ENCODE measurements at regions of chr9 and their contacts with region 1.

Region 1: DNA sequence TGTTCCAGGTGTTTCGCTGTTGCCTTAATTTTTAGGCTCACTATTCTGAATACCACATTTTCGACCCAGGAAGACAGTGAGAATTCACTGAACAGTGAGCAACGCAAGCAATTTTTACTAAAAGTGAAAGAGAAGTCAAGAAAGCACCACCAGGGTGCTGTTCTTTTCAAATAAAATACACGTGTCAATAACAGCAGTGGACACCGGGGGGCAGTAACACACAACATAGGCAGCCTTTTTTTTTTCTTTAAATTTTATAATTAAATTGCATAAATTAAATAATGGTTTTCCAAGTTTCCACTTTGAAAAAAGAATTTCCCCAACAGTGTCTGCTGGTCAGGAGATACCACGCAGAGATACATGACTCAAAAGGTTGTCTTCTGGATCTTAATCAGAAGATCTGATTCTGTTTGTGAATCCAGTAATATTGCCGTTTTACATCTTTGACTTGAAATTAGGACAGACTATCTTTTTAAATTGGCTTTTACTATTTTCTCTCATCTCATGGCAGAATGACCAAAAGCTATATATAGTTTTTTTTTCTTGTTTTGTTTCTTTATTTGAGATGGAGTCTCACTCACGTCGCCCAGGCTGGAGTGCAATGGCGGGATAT is 47.1 kb upstream of the SH3GL2 start:
- DNase-seq: peak in 2 of 3 donors; percentile 20 to 66
- ATAC-seq: no peak
- H3K4me3 ChIP-seq: no peak overlapping the region
- H3K27ac ChIP-seq: no peak overlapping the region
- H3K4me1 ChIP-seq: no peaks in the 10 kb centered on the region
- H3K27me3 ChIP-seq: no peaks in the 10 kb centered on the region

Region 2: DNA sequence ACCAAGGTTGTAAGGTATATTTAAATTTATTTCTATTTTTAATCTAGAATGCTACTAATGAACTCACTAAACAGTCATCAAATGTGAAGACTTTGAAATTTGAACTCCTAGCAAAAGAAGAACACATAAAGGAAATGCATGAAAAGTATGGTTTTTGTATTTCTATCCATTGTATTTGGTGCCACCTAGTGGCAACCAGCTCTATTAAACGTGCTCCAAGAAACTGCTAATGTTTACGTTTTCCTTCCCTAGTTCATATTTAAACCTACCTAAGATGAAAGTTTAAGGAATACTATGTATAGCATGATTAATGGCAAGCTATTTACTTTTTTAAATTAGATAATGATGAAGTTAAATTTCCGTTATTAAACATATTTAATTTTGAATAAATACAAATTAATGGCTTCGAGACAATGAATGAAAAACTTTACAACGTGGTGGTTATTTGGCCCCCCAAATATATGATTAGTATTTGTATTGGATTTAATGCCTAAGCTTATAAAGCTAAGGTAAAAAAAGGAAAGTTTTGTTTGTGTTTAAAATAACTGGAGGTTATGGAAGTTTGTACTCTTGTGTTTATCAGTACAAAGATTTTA is 68.8 kb before region 1 on chr9:
- intact Hi-C with region 1: no loop called
- DNase-seq: no peak
- ATAC-seq: no peak
- H3K4me3 ChIP-seq: no peak overlapping the region
- H3K27ac ChIP-seq: no peak overlapping the region
- H3K4me1 ChIP-seq: no peaks in the 10 kb centered on the region
- H3K27me3 ChIP-seq: no peaks in the 10 kb centered on the region

Region 3: GRCh38 chr9:17487467-17487866 is 44.3 kb before region 1 on chr9:
- intact Hi-C with region 1: no loop called
- DNase-seq: no peak
- ATAC-seq: no peak
- H3K4me3 ChIP-seq: no peak overlapping the region
- H3K27ac ChIP-seq: no peak overlapping the region
- H3K4me1 ChIP-seq: no peaks in the 10 kb centered on the region
- H3K27me3 ChIP-seq: no peaks in the 10 kb centered on the region

Region 4: DNA sequence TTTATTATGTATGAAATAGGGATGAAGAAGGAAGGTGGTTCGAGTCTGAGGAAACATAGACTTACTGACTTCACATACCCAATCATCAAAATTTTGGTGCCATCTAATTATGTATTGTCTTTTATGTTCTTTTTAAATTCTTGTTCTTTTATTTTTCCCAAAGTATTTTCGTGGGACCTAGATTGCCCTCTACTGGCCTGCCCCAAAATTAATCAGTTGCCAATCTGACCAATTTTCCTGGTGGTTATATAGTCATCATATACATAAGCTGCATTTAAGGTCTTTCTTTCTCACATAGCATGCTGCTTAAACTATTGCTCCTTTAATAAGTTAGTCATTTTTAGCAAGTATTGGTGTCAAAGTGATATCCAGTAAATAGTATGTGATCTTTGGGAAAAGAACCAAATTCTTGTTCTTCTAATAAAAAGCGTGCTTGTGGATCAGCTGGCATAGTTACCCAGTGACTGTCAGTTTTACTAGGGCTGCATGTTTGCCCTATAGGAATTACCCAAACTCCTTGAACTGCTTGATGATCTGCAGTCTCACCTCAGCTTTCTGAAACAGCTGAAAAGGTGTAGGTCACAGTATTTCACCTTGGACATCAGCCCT is 270.6 kb after region 1 on chr9:
- intact Hi-C with region 1: loop called in 3 of 4 experiments (anchors 5 to 10 kb)
- DNase-seq: no peak
- ATAC-seq: no peak
- H3K4me3 ChIP-seq: no peak overlapping the region
- H3K27ac ChIP-seq: no peak overlapping the region
- H3K4me1 ChIP-seq: no peaks in the 10 kb centered on the region
- H3K27me3 ChIP-seq: no peaks in the 10 kb centered on the region

Region 5: DNA sequence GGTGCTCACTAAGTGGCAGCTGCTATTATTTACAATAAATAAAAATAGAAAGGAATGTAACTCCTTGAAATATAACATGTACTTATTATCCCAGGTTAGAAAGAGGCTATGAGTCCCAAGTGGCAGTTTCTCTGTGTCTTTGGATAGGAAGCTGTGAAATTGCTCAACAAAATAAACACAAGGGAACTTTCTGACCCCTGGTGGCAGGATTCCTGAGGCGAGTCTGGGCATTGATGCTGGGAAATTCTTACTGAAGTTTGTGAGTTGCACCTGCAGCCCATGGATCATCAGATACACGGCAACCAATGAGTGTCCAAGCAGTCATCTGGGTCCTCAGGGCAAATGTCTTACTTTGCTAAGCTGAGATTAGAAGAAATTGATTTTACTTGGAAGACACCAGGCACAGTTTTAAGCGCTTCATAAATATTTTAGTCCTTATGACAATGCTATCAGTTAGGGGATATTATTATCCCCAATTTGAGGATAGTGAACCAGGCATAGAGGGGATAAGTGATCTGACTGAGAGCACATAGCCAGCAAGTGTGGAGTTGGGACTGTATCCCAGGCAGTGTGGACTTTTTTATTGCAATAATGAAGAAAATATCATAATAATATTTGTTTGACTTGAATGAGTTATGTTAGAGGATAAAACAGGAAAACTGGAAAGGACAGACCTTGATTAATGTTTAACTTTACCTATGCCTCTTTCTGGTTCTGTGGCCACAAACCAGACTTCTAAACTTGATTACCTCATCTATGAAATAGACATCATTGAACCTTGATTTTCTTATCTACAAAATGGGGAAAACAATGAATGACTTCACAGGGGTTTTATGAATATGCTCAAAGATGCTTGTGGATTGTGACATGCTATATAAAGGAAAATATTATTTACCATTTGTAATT is 676.7 kb after region 1 on chr9:
- intact Hi-C with region 1: loop called in 2 of 4 experiments (anchors 5 to 10 kb)
- DNase-seq: peak in 2 of 3 donors; percentile 19 to 65
- ATAC-seq: peak; percentile 45 to 57
- H3K4me3 ChIP-seq: no peak overlapping the region
- H3K27ac ChIP-seq: no peak overlapping the region
- H3K4me1 ChIP-seq: no peaks in the 10 kb centered on the region
- H3K27me3 ChIP-seq: no peaks in the 10 kb centered on the region

Region 6: GRCh38 chr9:18215626-18216025 is 683.9 kb after region 1 on chr9:
- intact Hi-C with region 1: loop called in 1 of 4 experiments (anchors 10 kb)
- DNase-seq: no peak
- ATAC-seq: no peak
- H3K4me3 ChIP-seq: no peak overlapping the region
- H3K27ac ChIP-seq: no peak overlapping the region
- H3K4me1 ChIP-seq: no peaks in the 10 kb centered on the region
- H3K27me3 ChIP-seq: no peaks in the 10 kb centered on the region

Measured in right cardiac atrium (tissue), 5 donors.